Aorta (tissue), 5 donors: ENCODE measurements at regions of chr17 and their contacts with region 1.

Region 1: GRCh38 chr17:64025732-64026294 is 5.4 kb upstream of the ICAM2 start:
- DNase-seq: peak; percentile 87 to 91
- ATAC-seq: peak; percentile 86
- H3K4me3 ChIP-seq: no peak overlapping the region
- H3K27ac ChIP-seq: no peak overlapping the region
- H3K4me1 ChIP-seq: no peaks in the 10 kb centered on the region
- H3K27me3 ChIP-seq: no peaks in the 10 kb centered on the region

Region 2: GRCh38 chr17:63919311-63919723 is 106.5 kb before region 1 on chr17:
- intact Hi-C with region 1: loop called (anchors 5 to 10 kb)
- DNase-seq: peak; percentile 68 to 77
- ATAC-seq: peak; percentile 80
- H3K4me3 ChIP-seq: no peak overlapping the region
- H3K27ac ChIP-seq: no peak overlapping the region
- H3K4me1 ChIP-seq: no peaks in the 10 kb centered on the region
- H3K27me3 ChIP-seq: no peaks in the 10 kb centered on the region

Region 3: DNA sequence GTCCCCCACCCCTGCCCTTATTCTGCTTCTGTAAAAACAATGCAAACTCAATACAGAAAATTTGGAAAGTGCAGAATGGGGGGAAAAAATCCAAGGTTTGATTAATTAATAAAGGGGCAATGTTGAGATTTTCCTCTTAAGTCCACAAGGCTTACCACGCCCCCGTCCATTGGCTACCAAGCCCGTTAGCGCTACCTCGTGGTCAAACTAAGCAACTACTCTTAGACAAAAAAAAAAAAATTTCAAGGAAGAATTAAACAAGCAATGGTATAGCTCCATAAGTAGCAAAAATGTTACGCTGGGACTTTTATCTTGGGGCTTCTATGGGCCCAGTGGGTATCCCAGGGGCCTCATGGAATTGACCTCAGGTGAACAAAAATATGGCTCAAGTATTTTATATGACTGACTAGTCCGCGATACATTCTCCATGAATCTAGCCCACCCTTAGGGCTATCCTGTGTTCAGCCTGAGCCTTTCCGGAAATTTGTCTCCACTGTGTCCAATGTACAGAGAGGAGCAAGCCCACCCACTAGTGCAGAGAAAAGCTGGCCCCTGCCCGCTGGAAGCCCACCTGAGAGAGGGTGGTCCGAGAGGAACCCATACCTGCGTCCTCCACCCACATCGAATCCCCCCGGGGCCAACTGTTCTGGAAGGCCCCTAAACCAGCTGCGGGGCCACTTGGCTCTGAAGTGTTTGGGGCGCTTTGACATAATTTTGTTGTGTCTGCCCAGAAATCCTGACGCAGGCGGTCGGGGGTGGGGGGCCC is 256.3 kb after region 1 on chr17:
- intact Hi-C with region 1: loop called (anchors 10 kb)
- DNase-seq: peak in 1 of 2 donors; percentile 61
- ATAC-seq: peak; percentile 68
- H3K4me3 ChIP-seq: no peak overlapping the region
- H3K27ac ChIP-seq: no peak overlapping the region
- H3K4me1 ChIP-seq: no peaks in the 10 kb centered on the region
- H3K27me3 ChIP-seq: no peaks in the 10 kb centered on the region